ENCODE measurements at regions of chr15 and their contacts with region 1.

Region 1: DNA sequence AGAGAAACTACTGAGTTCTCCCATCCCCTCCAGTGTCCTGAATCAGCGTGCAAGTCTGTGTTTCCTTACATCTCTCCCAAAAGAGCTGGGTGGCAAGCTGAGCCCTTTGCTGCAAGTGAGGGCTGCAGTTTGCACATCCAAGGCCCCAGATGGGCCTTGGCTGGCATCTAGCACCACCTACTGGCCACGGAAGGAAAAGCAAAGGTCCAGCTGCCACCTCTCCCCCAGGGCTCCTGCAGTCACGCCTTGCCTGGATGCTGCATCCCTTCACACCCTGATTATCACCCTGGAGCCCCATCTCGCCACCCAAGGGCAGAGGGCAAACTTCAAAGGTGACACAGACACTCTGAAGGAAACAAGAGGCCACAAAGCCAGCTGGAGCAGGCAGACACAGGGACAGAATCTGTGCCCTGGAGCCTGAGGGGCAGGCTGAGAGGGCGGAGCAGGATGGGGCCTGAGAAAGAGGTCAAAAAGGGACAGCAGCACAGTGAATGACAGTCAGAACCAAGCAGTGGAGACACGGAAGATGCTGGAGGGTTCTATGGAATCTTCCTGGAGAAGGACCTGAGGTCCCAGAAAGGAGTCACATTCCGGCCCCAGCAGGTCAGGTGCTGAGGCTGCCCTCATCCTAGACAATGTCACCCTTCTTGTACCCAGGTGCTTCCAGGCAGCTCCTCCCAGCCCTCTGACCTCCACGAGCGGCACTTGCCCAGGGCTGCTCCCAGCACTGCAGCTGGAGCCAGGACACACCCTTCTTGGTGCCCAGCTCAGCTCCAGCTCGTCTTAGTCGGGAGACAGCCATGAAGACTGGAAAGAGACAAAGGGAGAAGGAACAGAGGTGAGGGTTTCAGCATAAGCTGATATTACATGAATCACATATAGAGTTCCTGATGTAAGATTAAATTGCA is 18.3 kb upstream of the NTRK3 start:
- DNase-seq: peak; percentile 65 to 90
- ATAC-seq: peak; percentile 83
- H3K4me3 ChIP-seq: no peak overlapping the region
- H3K27ac ChIP-seq: no peak overlapping the region
- H3K4me1 ChIP-seq: no peaks in the 10 kb centered on the region
- H3K27me3 ChIP-seq: no peaks in the 10 kb centered on the region

Region 2: DNA sequence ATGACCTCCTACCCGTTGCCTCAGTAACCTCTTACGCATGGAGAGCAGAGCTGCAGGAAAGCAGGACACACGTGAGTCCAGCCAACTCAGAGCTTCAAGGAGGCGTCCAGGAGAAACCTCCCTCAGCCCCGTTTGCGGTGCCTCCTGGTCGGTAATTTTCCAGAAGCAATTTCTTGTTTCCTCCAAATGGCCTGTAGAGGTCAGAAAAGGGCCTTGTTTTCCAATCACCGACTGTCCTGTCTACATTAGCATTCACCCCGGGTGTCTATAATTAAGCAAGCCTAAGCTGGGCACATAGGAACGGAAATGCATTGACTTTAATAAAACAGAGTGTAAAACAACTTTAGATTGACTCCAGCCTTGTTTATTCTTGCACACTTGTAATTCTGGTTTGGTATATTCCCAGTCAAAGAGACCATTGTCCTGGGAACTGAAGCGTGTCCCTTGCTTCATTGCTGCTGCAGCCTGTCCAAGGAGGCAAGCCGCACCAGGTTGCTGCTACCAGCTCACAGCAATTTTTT is 1358.9 kb before region 1 on chr15:
- intact Hi-C with region 1: loop called (anchors 10 kb)
- DNase-seq: no peak
- ATAC-seq: peak; percentile 54
- H3K4me3 ChIP-seq: no peak overlapping the region
- H3K27ac ChIP-seq: no peak overlapping the region
- H3K4me1 ChIP-seq: no peaks in the 10 kb centered on the region
- H3K27me3 ChIP-seq: peaks cover 0 to 2% of the 10 kb centered on the region in 2 donors

Region 3: GRCh38 chr15:87033056-87033455 is 1241.8 kb before region 1 on chr15:
- intact Hi-C with region 1: loop called in 1 of 2 experiments (anchors 10 kb)
- DNase-seq: no peak
- ATAC-seq: no peak
- H3K4me3 ChIP-seq: no peak overlapping the region
- H3K27ac ChIP-seq: no peak overlapping the region
- H3K4me1 ChIP-seq: no peaks in the 10 kb centered on the region
- H3K27me3 ChIP-seq: no peaks in the 10 kb centered on the region

Region 4: DNA sequence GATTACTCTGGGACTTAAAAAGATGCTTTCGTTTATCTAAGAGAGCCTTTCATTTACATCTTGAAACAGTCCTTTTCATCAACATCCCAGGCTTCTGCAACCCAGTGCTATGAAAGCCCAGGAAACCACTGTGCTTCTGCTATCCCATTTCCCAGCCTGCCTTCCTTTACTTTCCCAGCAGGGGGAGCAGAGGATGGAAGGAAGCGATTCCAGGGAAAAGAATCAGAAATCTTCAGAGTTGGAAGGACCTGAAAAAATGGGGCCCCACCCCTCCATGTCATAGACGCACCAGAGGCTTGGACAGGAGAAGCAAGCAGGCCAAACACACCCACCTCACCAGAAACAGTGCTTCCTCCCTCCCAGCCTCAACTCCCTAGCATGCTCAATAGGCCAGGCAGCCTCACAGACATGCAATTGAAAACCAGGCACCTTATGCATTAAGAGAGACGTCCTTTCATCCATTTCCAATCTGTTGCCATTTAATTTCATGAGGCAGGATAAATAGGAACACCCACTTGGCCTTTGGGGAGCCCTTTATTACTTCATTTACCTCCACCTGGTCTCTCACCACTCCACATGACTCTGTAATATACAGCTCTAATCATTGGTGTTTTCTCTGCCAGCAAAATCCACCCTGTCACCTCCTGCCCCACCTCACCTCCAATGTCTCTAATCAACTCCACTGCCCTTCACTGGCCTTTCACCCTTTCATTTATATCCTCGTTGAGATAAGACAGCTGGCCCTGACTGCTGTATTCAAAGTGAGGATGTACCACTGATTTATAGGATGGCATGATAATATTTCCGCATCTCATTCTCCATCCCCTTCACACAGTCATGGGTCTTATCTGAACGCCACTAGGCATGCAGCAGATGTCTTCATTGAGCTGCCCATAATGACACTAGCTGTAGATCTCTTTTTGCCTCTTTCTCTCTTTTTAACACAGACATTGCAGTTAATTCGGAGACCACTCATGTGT is 602.2 kb before region 1 on chr15:
- intact Hi-C with region 1: loop called in 1 of 2 experiments (anchors 5 kb)
- DNase-seq: peak in 1 of 2 donors; percentile 50
- ATAC-seq: peak; percentile 62
- H3K4me3 ChIP-seq: no peak overlapping the region
- H3K27ac ChIP-seq: no peak overlapping the region
- H3K4me1 ChIP-seq: no peaks in the 10 kb centered on the region
- H3K27me3 ChIP-seq: no peaks in the 10 kb centered on the region

Region 5: GRCh38 chr15:88586401-88587162 is 311.8 kb after region 1 on chr15:
- intact Hi-C with region 1: no loop called
- DNase-seq: no peak
- ATAC-seq: no peak
- H3K4me3 ChIP-seq: no peak overlapping the region
- H3K27ac ChIP-seq: no peak overlapping the region
- H3K4me1 ChIP-seq: no peaks in the 10 kb centered on the region
- H3K27me3 ChIP-seq: no peaks in the 10 kb centered on the region

Measured in aorta (tissue), 5 donors.